Aorta (tissue), 5 donors: ENCODE measurements at regions of chr6 and their contacts with region 1.

Region 1: GRCh38 chr6:129345890-129346289 is 364.1 kb downstream of the ARHGAP18 start:
- DNase-seq: no peak
- ATAC-seq: no peak
- H3K4me3 ChIP-seq: no peak overlapping the region
- H3K27ac ChIP-seq: no peak overlapping the region
- H3K4me1 ChIP-seq: no peaks in the 10 kb centered on the region
- H3K27me3 ChIP-seq: no peaks in the 10 kb centered on the region

Region 2: GRCh38 chr6:127690092-127690491 is 1655.8 kb before region 1 on chr6:
- intact Hi-C with region 1: loop called in 1 of 2 experiments (anchors 5 kb)
- DNase-seq: no peak
- ATAC-seq: no peak
- H3K4me3 ChIP-seq: no peak overlapping the region
- H3K27ac ChIP-seq: no peak overlapping the region
- H3K4me1 ChIP-seq: no peaks in the 10 kb centered on the region
- H3K27me3 ChIP-seq: no peaks in the 10 kb centered on the region